ENCODE measurements at regions of chr17 and their contacts with region 1.

Region 1: GRCh38 chr17:36017799-36018198 is at the start of gene CCL23:
- DNase-seq: no peak
- ATAC-seq: no peak
- total RNA-seq, gene CCL23: not detected

Region 2: GRCh38 chr17:36072431-36073121 is 54.8 kb after region 1 on chr17:
- intact Hi-C with region 1: loop called (anchors 10 kb)
- DNase-seq: peak; percentile 83
- ATAC-seq: no peak

Region 3: DNA sequence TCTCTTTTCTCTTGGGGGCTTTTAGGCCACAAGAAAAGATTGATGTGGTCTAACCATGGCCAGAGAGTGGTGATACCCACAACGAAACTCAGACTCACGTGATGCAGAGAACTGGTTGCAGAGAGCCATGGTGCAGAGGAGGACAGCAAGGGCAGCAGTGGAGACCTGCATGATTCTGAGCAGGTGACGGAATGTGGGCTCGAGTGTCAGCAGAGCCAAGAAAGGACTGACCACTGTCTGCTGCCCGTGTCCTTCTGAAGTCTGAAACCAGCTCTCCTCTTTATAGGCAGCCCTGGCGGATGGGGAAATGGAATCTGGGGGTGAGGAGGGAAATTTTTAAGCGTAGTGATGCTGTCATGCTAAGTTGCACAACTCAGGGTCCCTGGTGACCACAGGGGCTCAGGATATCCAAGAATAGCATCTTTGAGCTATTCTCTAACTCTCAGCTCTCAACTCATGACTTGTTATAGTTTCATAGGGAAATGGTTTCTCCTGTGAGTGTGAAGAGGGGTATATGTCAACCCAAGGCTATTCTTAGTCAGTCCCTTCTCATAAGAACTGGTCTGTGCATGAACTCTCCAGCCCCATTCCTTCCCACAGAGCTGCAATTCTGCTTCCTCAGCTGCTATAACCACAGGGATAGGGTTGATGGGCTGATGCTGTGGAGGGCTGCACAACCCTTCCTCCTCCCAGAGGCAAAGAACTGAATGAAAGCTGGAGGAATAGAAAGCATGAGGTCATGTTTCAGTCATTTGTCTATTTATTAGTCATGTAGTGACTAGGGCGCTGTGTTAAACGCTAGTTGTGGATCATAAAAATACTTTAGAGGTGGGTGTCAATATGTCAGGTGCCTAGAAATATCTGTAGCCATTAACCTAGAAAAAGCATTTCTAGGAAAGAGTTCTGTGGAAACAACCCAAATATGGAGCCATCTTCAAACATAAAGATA is 72.4 kb after region 1 on chr17 and contains the start of gene CCL3:
- intact Hi-C with region 1: no loop called
- DNase-seq: no peak
- ATAC-seq: peak; percentile 42
- total RNA-seq, gene CCL3: not detected

Measured in Right ventricle myocardium inferior (tissue), 1 donor.